H1 (cell line): ENCODE measurements at regions of chr5 and their contacts with region 1.

Region 1: GRCh38 chr5:134527146-134527960 is 1.9 kb downstream of the JADE2 start:
- DNase-seq: peak; percentile 91 to 93
- H3K4me3 ChIP-seq: peak overlapping the region; percentile 68 to 85 (median 77)
- H3K27ac ChIP-seq: peak overlapping the region; percentile 62
- H3K4me1 ChIP-seq: peaks cover 21 to 38% (median 27%) of the 10 kb centered on the region in 4 experiments
- H3K27me3 ChIP-seq: no peaks in the 10 kb centered on the region
- CTCF ChIP-seq: peak in 2 of 3 experiments; percentile 76 to 81; a peak in 3 of 4 replicates
- EP300 ChIP-seq: no peak
- POLR2A ChIP-seq: no peak; a peak in 1 of 3 replicates
- RAD21 ChIP-seq: peak; percentile 58 to 75

Region 2: GRCh38 chr5:134430001-134430569 is 97.3 kb before region 1 on chr5:
- CTCF ChIA-PET with region 1: interaction called, 7 read pairs
- POLR2A ChIA-PET with region 1: interaction called, 24 read pairs
- DNase-seq: no peak
- H3K4me3 ChIP-seq: peak overlapping the region in 1 of 4 experiments; percentile 44; a peak in 2 of 8 replicates
- H3K27ac ChIP-seq: no peak overlapping the region
- H3K4me1 ChIP-seq: peaks cover 6 to 27% (median 16%) of the 10 kb centered on the region in 4 experiments; a peak in 6 of 7 replicates
- H3K27me3 ChIP-seq: peaks cover 0 to 1% (median 0%) of the 10 kb centered on the region in 4 experiments; a peak in 1 of 7 replicates
- CTCF ChIP-seq: peak in 1 of 3 experiments; percentile 7; a peak in 1 of 4 replicates
- EP300 ChIP-seq: no peak
- POLR2A ChIP-seq: no peak
- RAD21 ChIP-seq: no peak; a peak in 1 of 4 replicates

Region 3: GRCh38 chr5:134511788-134512650 is 15.3 kb before region 1 on chr5:
- CTCF ChIA-PET with region 1: interaction called, 23 read pairs
- POLR2A ChIA-PET with region 1: interaction called, 131 read pairs
- DNase-seq: peak in 1 of 2 experiments; percentile 73
- H3K4me3 ChIP-seq: peak overlapping the region in 2 of 4 experiments; percentile 20 to 32; a peak in 3 of 8 replicates
- H3K27ac ChIP-seq: peak overlapping the region; percentile 77
- H3K4me1 ChIP-seq: peaks cover 16 to 23% (median 19%) of the 10 kb centered on the region in 4 experiments
- H3K27me3 ChIP-seq: no peaks in the 10 kb centered on the region
- CTCF ChIP-seq: peak; percentile 49 to 56 (median 54)
- EP300 ChIP-seq: no peak
- POLR2A ChIP-seq: peak; percentile 52 to 63
- RAD21 ChIP-seq: peak; percentile 61 to 73

Region 4: DNA sequence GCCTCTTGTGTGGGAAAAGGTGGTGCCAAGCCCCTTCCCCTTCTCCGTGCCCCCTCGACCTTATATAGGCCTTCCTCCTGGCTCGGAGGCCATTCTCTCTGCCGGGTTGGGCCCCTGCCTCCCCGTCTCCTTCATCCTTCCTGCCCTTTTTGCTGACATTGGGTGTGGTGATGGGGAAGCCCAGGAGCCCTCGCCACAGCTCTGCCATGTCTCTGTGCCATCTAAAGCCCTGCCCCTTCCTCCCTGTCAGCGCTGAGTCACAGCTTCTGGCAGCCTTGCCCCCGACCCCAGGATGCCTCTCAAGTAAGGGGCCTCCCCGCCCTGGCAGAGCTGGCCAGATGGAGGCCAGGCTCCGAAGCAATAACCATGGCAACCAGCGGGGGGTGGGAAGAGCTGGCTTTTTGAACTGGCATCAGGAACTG is 28.5 kb after region 1 on chr5:
- CTCF ChIA-PET with region 1: interaction called, 89 read pairs
- POLR2A ChIA-PET with region 1: interaction called, 4 read pairs
- DNase-seq: peak in 1 of 2 experiments; percentile 72
- H3K4me3 ChIP-seq: no peak overlapping the region
- H3K27ac ChIP-seq: no peak overlapping the region
- H3K4me1 ChIP-seq: peaks cover 0 to 9% (median 1%) of the 10 kb centered on the region in 4 experiments; a peak in 4 of 7 replicates
- H3K27me3 ChIP-seq: no peaks in the 10 kb centered on the region
- CTCF ChIP-seq: peak; percentile 12 to 24 (median 15); a peak in 3 of 4 replicates
- EP300 ChIP-seq: no peak
- POLR2A ChIP-seq: no peak
- RAD21 ChIP-seq: peak; percentile 5 to 28; a peak in 1 of 4 replicates

Region 5: DNA sequence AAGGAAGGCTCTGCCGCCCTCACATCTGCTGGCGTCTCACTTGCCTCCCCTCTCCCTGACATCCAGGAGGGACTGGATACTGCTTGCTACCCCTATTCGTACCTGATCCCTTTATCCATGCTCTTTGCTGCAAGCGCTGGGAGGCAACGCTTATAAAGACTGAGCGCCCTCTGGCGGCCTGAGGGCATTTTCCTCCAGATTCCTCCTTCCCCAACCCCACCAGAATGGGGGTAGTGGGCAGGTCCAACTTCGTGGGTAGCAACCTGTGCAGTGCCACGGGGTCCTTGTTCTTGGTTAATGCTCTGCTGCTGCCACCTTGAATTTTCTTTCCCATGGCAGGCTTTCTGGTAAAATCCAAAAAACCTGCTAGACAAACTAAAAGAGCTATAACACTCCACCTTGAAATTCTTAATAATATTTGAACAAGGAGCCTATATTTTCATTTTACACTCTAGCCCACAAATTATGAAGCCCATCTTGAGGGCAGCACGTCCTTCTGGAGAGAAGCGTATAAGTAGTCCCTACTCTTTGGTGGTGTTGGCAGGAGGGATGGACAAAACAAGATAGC is 50.5 kb after region 1 on chr5:
- CTCF ChIA-PET with region 1: interaction called, 33 read pairs
- POLR2A ChIA-PET with region 1: interaction called, 10 read pairs
- DNase-seq: peak; percentile 69 to 94
- H3K4me3 ChIP-seq: no peak overlapping the region
- H3K27ac ChIP-seq: no peak overlapping the region
- H3K4me1 ChIP-seq: no peaks in the 10 kb centered on the region; a peak in 1 of 7 replicates
- H3K27me3 ChIP-seq: no peaks in the 10 kb centered on the region
- CTCF ChIP-seq: peak in 2 of 3 experiments; percentile 93 to 98; a peak in 3 of 4 replicates
- EP300 ChIP-seq: no peak
- POLR2A ChIP-seq: no peak
- RAD21 ChIP-seq: peak; percentile 92 to 93